ENCODE measurements at regions of chr17 and their contacts with region 1.

Region 1: DNA sequence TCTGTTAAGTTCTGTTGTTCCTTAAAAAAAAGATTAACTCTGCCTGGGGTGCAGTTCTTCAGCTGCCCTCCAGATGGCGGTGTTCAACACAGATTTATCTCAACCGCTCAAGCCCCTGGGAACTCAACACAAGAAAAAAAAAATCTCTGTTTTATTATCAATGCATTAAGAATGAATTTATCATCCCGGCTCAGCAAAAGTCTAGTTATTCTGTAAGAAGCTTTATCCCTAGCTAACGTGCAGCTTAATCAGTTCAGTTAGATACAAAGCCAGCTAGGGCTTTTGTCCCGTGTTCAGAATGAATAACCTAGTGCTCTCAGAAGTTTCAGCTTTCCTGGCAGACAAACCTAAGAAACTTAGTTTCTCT is 475.9 kb upstream of the CCL2 start:
- DNase-seq: peak; percentile 32 to 44
- H3K4me3 ChIP-seq: no peak overlapping the region
- H3K27ac ChIP-seq: no peak overlapping the region
- H3K4me1 ChIP-seq: peaks cover 0 to 7% of the 10 kb centered on the region in 2 donors
- H3K27me3 ChIP-seq: no peaks in the 10 kb centered on the region
- CTCF ChIP-seq: peak; percentile 75 to 98 (median 94)
- POLR2A ChIP-seq: no peak

Region 2: DNA sequence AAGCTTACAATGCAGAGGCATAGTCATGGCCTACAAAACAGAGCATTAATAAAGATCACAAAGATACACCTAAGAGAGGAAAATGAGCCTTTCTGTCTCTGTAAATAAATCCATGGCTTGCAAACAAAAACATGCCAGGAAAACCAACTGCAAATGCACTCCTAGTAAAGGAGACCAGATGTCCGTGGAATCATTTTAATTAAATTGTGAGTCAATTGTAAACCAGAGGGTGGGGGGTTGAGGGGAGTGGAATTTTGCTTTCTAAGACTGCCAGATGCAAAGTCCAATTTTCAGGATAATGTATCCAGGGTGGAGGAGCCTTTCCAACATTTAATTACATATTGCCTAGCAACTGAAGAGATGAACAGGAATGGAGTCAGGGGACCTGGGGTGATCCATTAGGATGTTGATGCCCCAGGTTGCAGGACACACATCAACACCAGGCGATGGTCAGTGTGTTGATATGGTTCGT is 85.6 kb after region 1 on chr17:
- intact Hi-C with region 1: no loop called
- DNase-seq: no peak
- H3K4me3 ChIP-seq: no peak overlapping the region
- H3K27ac ChIP-seq: no peak overlapping the region
- H3K4me1 ChIP-seq: no peaks in the 10 kb centered on the region
- H3K27me3 ChIP-seq: no peaks in the 10 kb centered on the region
- CTCF ChIP-seq: no peak
- POLR2A ChIP-seq: no peak

Region 3: GRCh38 chr17:34146440-34147043 is 367.3 kb after region 1 on chr17:
- intact Hi-C with region 1: loop called (anchors 10 kb)
- DNase-seq: peak; percentile 60 to 65
- H3K4me3 ChIP-seq: no peak overlapping the region
- H3K27ac ChIP-seq: no peak overlapping the region
- H3K4me1 ChIP-seq: peaks cover 0 to 5% of the 10 kb centered on the region in 2 donors
- H3K27me3 ChIP-seq: no peaks in the 10 kb centered on the region
- CTCF ChIP-seq: peak in 5 of 6 experiments; percentile 16 to 82 (median 58)
- POLR2A ChIP-seq: no peak